PC-9 (cell line): ENCODE measurements at regions of chr20 and their contacts with region 1.

Region 1: GRCh38 chr20:3632311-3633004 is 30.7 kb downstream of the GFRA4 start:
- DNase-seq: no peak
- H3K4me3 ChIP-seq: no peak overlapping the region
- H3K27ac ChIP-seq: no peak overlapping the region
- H3K4me1 ChIP-seq: no peaks in the 10 kb centered on the region
- H3K27me3 ChIP-seq: no peaks in the 10 kb centered on the region
- CTCF ChIP-seq: no peak

Region 2: GRCh38 chr20:3068986-3069900 is 563.2 kb before region 1 on chr20:
- CTCF ChIA-PET with region 1: interaction called, 12 read pairs
- POLR2A ChIA-PET with region 1: no interaction called
- intact Hi-C with region 1: no loop called
- DNase-seq: peak; percentile 67 to 92
- H3K4me3 ChIP-seq: no peak overlapping the region
- H3K27ac ChIP-seq: peak overlapping the region; percentile 68
- H3K4me1 ChIP-seq: peaks cover 54% of the 10 kb centered on the region
- H3K27me3 ChIP-seq: no peaks in the 10 kb centered on the region
- CTCF ChIP-seq: no peak; the same call in 1 of the 2 replicates

Region 3: DNA sequence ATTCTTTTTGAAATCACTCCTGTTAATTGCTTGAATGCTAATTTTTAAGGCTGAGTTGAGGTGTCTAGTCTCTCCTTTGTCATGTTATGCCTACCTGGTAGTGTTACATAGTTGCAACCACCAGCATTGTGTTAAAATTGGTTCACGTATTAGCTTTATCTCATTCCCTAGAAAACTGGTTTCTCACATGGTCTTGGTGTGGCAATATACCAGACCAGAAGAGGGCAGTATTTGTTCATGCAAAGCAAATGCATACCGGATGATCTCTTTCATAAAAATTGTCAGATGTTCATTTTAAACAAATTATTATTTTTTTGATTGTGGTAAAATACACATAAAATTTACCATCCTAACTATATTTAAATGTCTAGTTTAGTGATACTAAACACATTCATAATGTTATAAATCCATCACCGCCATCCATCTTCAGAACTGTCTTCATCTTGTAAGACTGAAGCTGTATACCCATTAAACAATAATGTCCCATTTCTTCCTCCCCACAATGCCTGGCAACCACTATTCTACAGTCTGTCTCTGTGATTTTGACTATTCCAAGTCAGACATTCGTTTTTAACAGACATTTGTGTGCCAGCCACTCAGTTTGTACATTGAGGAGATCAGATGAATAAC is 68.8 kb before region 1 on chr20:
- CTCF ChIA-PET with region 1: interaction called, 4 read pairs
- POLR2A ChIA-PET with region 1: no interaction called
- intact Hi-C with region 1: loop called (anchors 10 kb)
- DNase-seq: peak in 1 of 2 experiments; percentile 15
- H3K4me3 ChIP-seq: no peak overlapping the region
- H3K27ac ChIP-seq: no peak overlapping the region
- H3K4me1 ChIP-seq: no peaks in the 10 kb centered on the region
- H3K27me3 ChIP-seq: no peaks in the 10 kb centered on the region
- CTCF ChIP-seq: peak; percentile 80

Region 4: DNA sequence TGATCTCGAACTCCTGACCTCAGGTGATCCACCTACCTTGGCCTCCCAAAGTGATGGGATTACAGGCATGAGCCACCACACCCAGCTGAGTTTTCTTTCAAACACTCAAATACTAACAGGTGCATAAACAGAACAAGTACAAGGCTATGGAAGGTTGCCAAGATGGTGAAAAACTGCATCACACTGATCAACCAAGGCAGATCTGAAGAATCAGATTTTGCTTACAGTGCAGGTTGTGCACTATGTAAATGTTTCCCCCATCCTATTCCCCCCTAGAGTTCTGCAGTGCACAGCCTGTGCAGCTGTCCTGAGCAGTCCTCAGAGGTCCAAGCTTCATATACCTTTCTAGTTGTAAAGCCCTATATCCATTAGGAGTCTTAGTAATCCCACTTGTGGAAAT is 42.3 kb before region 1 on chr20:
- CTCF ChIA-PET with region 1: interaction called, 11 read pairs
- POLR2A ChIA-PET with region 1: no interaction called
- intact Hi-C with region 1: no loop called
- DNase-seq: no peak
- H3K4me3 ChIP-seq: no peak overlapping the region
- H3K27ac ChIP-seq: no peak overlapping the region
- H3K4me1 ChIP-seq: no peaks in the 10 kb centered on the region
- H3K27me3 ChIP-seq: no peaks in the 10 kb centered on the region
- CTCF ChIP-seq: no peak

Region 5: GRCh38 chr20:3679749-3680700 is 47.6 kb after region 1 on chr20:
- CTCF ChIA-PET with region 1: no interaction called
- POLR2A ChIA-PET with region 1: no interaction called
- intact Hi-C with region 1: no loop called
- DNase-seq: no peak
- H3K4me3 ChIP-seq: no peak overlapping the region
- H3K27ac ChIP-seq: no peak overlapping the region
- H3K4me1 ChIP-seq: no peaks in the 10 kb centered on the region
- H3K27me3 ChIP-seq: peaks cover 20% of the 10 kb centered on the region
- CTCF ChIP-seq: no peak